CD4-positive, alpha-beta T cell (primary cell): ENCODE measurements at regions of chr10 and their contacts with region 1.

Region 1: GRCh38 chr10:89095701-89096391 is 105.2 kb downstream of the FAS start:
- DNase-seq: no peak
- ATAC-seq: no peak
- H3K4me3 ChIP-seq: no peak overlapping the region
- H3K4me3 Mint-ChIP-seq: no peak overlapping the region
- H3K27ac ChIP-seq: no peak overlapping the region
- H3K27ac Mint-ChIP-seq: no peak overlapping the region
- H3K4me1 ChIP-seq: no peaks in the 10 kb centered on the region
- H3K4me1 Mint-ChIP-seq: no peaks in the 10 kb centered on the region
- H3K27me3 ChIP-seq: no peaks in the 10 kb centered on the region
- H3K27me3 Mint-ChIP-seq: no peaks in the 10 kb centered on the region
- CTCF ChIP-seq: no peak

Region 2: DNA sequence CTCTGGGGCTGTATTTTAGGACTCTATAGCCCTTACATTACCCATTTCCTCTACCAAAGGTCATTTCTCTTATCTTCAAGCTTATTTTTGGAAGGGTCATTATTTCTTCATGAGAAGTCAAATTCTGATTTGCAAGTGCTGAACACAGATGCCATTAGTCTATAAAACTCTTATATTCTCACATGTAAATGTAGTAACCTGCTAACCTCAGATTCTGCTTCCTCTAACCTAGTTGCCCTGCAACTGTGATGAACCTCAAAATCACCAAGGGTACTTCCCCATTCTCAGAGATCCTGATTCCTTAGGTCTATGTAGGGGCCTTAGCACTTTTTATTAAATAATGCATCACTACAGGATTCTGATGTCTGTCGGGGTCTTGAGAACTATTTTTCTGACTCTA is 98.9 kb before region 1 on chr10:
- CTCF ChIA-PET with region 1: no interaction called
- POLR2A ChIA-PET with region 1: no interaction called
- intact Hi-C with region 1: no loop called
- DNase-seq: peak in 3 of 14 experiments; percentile 59 to 63 (median 63)
- ATAC-seq: peak; percentile 19
- H3K4me3 ChIP-seq: no peak overlapping the region
- H3K4me3 Mint-ChIP-seq: no peak overlapping the region
- H3K27ac ChIP-seq: no peak overlapping the region
- H3K27ac Mint-ChIP-seq: peak overlapping the region; percentile 51
- H3K4me1 ChIP-seq: peaks cover 45% of the 10 kb centered on the region
- H3K4me1 Mint-ChIP-seq: peaks cover 80% of the 10 kb centered on the region
- H3K27me3 ChIP-seq: no peaks in the 10 kb centered on the region
- H3K27me3 Mint-ChIP-seq: no peaks in the 10 kb centered on the region
- CTCF ChIP-seq: no peak

Region 3: DNA sequence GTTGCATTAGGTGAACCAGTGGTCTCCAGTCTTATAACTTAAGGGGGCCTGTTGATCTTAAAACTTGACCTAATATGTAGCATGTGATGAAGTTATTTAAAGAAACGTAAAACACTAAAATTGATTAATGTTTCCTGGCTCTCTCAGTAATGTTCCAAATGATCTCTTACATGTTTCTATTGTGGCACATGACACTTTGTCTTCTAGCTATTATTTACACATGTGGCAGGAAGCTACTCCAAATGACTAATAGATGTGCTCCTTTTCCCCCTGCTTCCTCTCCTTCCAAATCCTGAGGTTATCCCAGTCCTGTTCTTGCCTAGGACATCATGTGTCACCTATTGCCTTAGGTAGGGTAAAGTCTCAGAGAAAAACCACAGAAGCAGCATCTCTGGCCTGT is 15.9 kb before region 1 on chr10:
- CTCF ChIA-PET with region 1: no interaction called
- POLR2A ChIA-PET with region 1: no interaction called
- intact Hi-C with region 1: loop called in 1 of 2 experiments (anchors 2 kb)
- DNase-seq: no peak
- ATAC-seq: no peak
- H3K4me3 ChIP-seq: no peak overlapping the region
- H3K4me3 Mint-ChIP-seq: no peak overlapping the region
- H3K27ac ChIP-seq: no peak overlapping the region
- H3K27ac Mint-ChIP-seq: no peak overlapping the region
- H3K4me1 ChIP-seq: peaks cover 4% of the 10 kb centered on the region
- H3K4me1 Mint-ChIP-seq: peaks cover 5% of the 10 kb centered on the region
- H3K27me3 ChIP-seq: no peaks in the 10 kb centered on the region
- H3K27me3 Mint-ChIP-seq: no peaks in the 10 kb centered on the region
- CTCF ChIP-seq: no peak

Region 4: DNA sequence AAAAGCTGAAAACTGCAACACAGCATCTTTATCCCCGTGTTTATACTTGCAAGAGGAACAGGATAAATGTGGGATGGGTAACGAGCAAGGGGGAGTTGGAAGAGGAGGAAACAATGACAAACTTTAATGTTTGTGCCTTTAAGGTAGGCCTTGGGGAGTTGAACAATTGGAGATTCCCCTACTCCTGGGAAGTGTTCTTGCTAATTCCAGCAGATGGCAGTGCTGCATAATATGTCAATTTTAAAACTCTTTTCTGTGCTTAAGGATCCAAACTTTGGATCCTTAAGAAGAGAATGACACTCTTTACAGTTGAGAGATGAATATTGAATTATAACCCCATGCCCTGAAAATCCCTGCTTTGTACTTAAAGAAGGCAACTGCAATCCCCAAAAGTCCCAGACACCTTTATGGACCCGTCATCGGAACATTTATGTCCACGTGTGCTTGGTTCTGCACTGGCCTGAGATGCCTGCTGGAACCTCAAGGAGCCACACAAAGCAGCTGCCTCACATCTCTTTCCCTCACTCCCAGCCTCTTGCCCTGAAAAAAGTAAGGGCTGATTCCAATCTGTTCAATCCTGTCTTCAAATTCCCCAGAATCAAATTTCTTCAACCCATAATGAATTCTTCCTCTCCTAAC is 330.5 kb after region 1 on chr10:
- CTCF ChIA-PET with region 1: no interaction called
- POLR2A ChIA-PET with region 1: no interaction called
- intact Hi-C with region 1: no loop called
- DNase-seq: peak in 4 of 14 experiments; percentile 15 to 62 (median 52)
- ATAC-seq: peak; percentile 71
- H3K4me3 ChIP-seq: no peak overlapping the region
- H3K4me3 Mint-ChIP-seq: no peak overlapping the region
- H3K27ac ChIP-seq: no peak overlapping the region
- H3K27ac Mint-ChIP-seq: no peak overlapping the region
- H3K4me1 ChIP-seq: no peaks in the 10 kb centered on the region
- H3K4me1 Mint-ChIP-seq: peaks cover 6% of the 10 kb centered on the region
- H3K27me3 ChIP-seq: peaks cover 0 to 6% of the 10 kb centered on the region in 2 experiments
- H3K27me3 Mint-ChIP-seq: no peaks in the 10 kb centered on the region
- CTCF ChIP-seq: peak; percentile 72

Region 5: DNA sequence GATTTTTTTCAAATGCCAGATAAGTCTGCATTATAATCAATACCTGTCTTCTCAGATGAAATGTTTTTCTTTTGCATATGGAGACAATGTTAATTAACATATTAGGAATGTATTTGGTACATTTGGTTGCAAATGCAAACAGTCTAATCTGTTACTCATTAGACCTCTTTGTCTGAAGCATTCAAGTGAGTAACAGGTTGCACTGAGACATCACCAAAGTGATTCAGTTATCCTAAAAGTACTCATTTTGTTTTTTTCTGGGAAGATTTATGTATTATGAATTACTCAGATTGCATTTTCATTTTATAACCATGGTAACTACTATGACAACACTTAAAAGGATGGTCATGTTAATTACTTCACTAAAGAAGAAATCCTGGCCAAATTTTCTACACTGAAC is 1248.4 kb after region 1 on chr10:
- CTCF ChIA-PET with region 1: no interaction called
- POLR2A ChIA-PET with region 1: no interaction called
- intact Hi-C with region 1: no loop called
- DNase-seq: no peak
- ATAC-seq: no peak
- H3K4me3 ChIP-seq: no peak overlapping the region
- H3K4me3 Mint-ChIP-seq: no peak overlapping the region
- H3K27ac ChIP-seq: no peak overlapping the region
- H3K27ac Mint-ChIP-seq: no peak overlapping the region
- H3K4me1 ChIP-seq: no peaks in the 10 kb centered on the region
- H3K4me1 Mint-ChIP-seq: no peaks in the 10 kb centered on the region
- H3K27me3 ChIP-seq: no peaks in the 10 kb centered on the region
- H3K27me3 Mint-ChIP-seq: peaks cover 4% of the 10 kb centered on the region
- CTCF ChIP-seq: no peak